GM10248 (cell line): ENCODE measurements at regions of chr17 and their contacts with region 1.

Region 1: GRCh38 chr17:59753522-59754467 is 46.3 kb downstream of the VMP1 start:
- DNase-seq: peak; percentile 72
- CTCF ChIP-seq: peak; percentile 55

Region 2: GRCh38 chr17:59707114-59707970 is 46.5 kb before region 1 on chr17 and contains the starts of genes PTRH2 and VMP1:
- CTCF ChIA-PET with region 1: interaction called, 11 read pairs
- POLR2A ChIA-PET with region 1: no interaction called
- DNase-seq: peak; percentile 97
- CTCF ChIP-seq: no peak

Region 3: DNA sequence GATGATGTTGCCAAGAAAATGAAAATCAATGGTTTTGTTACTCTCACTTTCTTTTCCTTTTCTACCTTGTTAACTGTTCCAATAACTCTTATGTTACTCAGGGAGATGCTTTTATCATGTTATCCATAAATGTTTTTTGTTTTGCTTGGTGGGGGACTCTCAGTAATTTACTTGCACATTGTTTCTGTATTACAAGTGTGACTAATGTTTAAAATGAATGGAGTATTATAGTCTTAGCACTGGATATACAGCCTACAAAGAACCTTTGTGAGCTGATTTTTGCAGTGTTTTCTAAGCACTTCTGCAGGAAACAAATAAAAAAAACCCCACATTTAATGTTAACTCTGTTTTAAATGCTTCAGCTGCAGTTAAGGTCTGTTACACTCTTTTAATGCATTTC is 34.3 kb before region 1 on chr17:
- CTCF ChIA-PET with region 1: no interaction called
- POLR2A ChIA-PET with region 1: no interaction called
- DNase-seq: no peak
- CTCF ChIP-seq: no peak

Region 4: GRCh38 chr17:59778996-59779395 is 25.2 kb after region 1 on chr17:
- CTCF ChIA-PET with region 1: interaction called, 41 read pairs
- POLR2A ChIA-PET with region 1: no interaction called
- DNase-seq: no peak
- CTCF ChIP-seq: no peak

Region 5: DNA sequence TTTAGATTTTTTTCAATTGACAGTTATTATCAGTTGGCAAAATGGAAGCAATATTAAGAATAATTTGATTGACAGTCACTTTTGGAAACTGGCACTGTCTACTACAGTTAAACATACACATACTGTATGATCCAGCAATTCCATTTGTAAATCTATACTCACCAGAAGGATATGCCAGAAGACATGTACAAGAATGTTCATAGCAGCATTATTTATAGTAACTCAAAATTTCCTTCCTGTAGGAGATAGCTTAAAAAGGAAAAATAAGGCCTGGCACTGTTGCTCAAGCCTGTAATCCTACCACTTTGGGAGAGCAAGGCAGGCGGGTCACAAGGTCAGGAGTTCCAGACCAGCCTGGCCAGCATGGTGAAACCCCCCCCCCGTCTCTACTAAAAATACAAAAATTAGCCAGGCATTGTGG is 43.0 kb after region 1 on chr17:
- CTCF ChIA-PET with region 1: no interaction called
- POLR2A ChIA-PET with region 1: no interaction called
- DNase-seq: no peak
- CTCF ChIP-seq: no peak

Region 6: GRCh38 chr17:59829217-59830006 is 75.6 kb after region 1 on chr17:
- CTCF ChIA-PET with region 1: interaction called, 21 read pairs
- POLR2A ChIA-PET with region 1: interaction called, 4 read pairs
- DNase-seq: peak; percentile 65
- CTCF ChIP-seq: no peak

Region 7: GRCh38 chr17:59846394-59847165 is 92.8 kb after region 1 on chr17:
- CTCF ChIA-PET with region 1: interaction called, 93 read pairs
- POLR2A ChIA-PET with region 1: interaction called, 5 read pairs
- DNase-seq: peak; percentile 53
- CTCF ChIP-seq: no peak